A673 (cell line): ENCODE measurements at regions of chr17 and their contacts with region 1.

Region 1: GRCh38 chr17:7561028-7561575 is 617 bp upstream of the SENP3 start:
- DNase-seq: peak; percentile 93
- H3K4me3 ChIP-seq: peak overlapping the region; percentile 90
- H3K27ac ChIP-seq: peak overlapping the region; percentile 92
- H3K4me1 ChIP-seq: peaks cover 33% of the 10 kb centered on the region
- H3K27me3 ChIP-seq: no peaks in the 10 kb centered on the region
- CTCF ChIP-seq: peak; percentile 86

Region 2: DNA sequence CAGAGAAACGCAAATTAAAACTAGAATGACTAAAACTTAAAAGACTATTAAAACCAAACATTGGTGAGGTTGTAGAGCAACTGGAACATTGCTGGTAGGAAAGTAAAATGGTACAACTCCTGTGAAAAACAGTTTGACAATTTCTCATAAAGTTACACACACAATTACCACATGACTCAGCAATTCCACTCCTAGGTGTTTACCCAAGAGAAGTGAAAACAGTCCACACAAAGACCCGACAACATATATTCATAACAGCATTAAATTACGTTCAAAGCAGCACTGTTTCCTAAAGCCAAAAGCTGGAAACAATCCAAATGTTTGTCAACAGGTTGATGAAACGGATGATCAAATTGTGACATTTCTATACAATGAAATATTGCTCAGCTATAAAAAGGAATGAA is 591.8 kb before region 1 on chr17:
- CTCF ChIA-PET with region 1: interaction called, 11 read pairs
- POLR2A ChIA-PET with region 1: no interaction called
- intact Hi-C with region 1: no loop called
- DNase-seq: no peak
- H3K4me3 ChIP-seq: no peak overlapping the region
- H3K27ac ChIP-seq: no peak overlapping the region
- H3K4me1 ChIP-seq: no peaks in the 10 kb centered on the region
- H3K27me3 ChIP-seq: no peaks in the 10 kb centered on the region
- CTCF ChIP-seq: no peak

Region 3: DNA sequence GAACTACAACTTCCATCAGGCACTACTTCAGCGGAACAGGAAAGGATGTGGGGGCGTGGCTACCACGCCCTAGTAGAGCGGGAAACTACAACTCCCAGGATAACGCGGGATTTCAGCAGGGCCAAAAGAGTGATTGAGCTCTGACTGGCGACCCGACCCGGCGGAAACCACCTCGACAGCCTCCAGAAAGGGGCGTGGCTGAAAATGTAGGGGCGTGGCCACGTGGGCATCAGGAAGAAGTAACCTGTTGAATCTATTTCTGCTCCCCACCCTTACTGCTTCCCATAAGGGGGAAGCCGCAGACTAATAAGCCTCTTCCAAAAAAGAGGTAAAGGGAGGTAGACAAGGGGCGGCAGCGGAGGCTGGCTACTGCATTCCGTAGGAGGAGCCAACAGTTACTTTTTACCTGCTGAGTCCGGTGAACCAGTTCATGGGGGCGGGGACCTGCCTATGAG is 125.9 kb before region 1 on chr17 and contains the start of gene TMEM102:
- CTCF ChIA-PET with region 1: interaction called, 7 read pairs
- POLR2A ChIA-PET with region 1: no interaction called
- intact Hi-C with region 1: loop called (anchors 2 kb)
- DNase-seq: peak; percentile 99
- H3K4me3 ChIP-seq: peak within 1 kb of the TSS; percentile 90
- H3K27ac ChIP-seq: peak within 1 kb of the TSS; percentile 41
- H3K4me1 ChIP-seq: peaks cover 30% of the 10 kb centered on the region
- H3K27me3 ChIP-seq: no peaks in the 10 kb centered on the region
- CTCF ChIP-seq: no peak
- total RNA-seq, gene TMEM102: 3.2 and 4.7 TPM in 2 replicates

Region 4: DNA sequence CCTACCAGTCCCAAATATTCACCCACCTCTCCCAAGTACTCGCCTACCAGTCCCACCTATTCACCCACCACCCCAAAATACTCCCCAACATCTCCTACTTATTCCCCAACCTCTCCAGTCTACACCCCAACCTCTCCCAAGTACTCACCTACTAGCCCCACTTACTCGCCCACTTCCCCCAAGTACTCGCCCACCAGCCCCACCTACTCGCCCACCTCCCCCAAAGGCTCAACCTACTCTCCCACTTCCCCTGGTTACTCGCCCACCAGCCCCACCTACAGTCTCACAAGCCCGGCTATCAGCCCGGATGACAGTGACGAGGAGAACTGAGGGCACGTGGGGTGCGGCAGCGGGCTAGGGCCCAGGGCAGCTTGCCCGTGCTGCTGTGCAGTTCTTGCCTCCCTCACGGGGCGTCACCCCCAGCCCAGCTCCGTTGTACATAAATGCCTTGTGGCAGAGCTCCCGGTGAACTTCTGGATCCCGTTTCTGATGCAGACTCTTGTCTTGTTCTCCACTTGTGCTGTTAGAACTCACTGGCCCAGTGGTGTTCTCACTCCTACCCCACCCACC is 47.2 kb before region 1 on chr17:
- CTCF ChIA-PET with region 1: interaction called, 32 read pairs
- POLR2A ChIA-PET with region 1: interaction called, 3 read pairs
- intact Hi-C with region 1: loop called (anchors 1 kb)
- DNase-seq: no peak
- H3K4me3 ChIP-seq: no peak overlapping the region
- H3K27ac ChIP-seq: no peak overlapping the region
- H3K4me1 ChIP-seq: peaks cover 6% of the 10 kb centered on the region
- H3K27me3 ChIP-seq: no peaks in the 10 kb centered on the region
- CTCF ChIP-seq: no peak

Region 5: GRCh38 chr17:7614422-7615264 is 53.5 kb after region 1 on chr17 and contains the start of gene FXR2:
- CTCF ChIA-PET with region 1: no interaction called
- POLR2A ChIA-PET with region 1: no interaction called
- intact Hi-C with region 1: no loop called
- DNase-seq: peak; percentile 100
- H3K4me3 ChIP-seq: peak within 1 kb of the TSS; percentile 92
- H3K27ac ChIP-seq: peak within 1 kb of the TSS; percentile 91
- H3K4me1 ChIP-seq: peaks cover 20% of the 10 kb centered on the region
- H3K27me3 ChIP-seq: no peaks in the 10 kb centered on the region
- CTCF ChIP-seq: peak; percentile 65
- total RNA-seq, gene FXR2: 101 TPM in 2 replicates

Region 6: DNA sequence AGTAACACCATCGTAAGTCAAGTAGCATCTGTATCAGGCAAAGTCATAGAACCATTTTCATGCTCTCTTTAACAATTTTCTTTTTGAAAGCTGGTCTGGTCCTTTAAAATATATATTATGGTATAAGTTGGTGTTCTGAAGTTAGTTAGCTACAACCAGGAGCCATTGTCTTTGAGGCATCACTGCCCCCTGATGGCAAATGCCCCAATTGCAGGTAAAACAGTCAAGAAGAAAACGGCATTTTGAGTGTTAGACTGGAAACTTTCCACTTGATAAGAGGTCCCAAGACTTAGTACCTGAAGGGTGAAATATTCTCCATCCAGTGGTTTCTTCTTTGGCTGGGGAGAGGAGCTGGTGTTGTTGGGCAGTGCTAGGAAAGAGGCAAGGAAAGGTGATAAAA is 112.1 kb after region 1 on chr17:
- CTCF ChIA-PET with region 1: no interaction called
- POLR2A ChIA-PET with region 1: no interaction called
- intact Hi-C with region 1: no loop called
- DNase-seq: peak; percentile 44
- H3K4me3 ChIP-seq: no peak overlapping the region
- H3K27ac ChIP-seq: no peak overlapping the region
- H3K4me1 ChIP-seq: no peaks in the 10 kb centered on the region
- H3K27me3 ChIP-seq: no peaks in the 10 kb centered on the region
- CTCF ChIP-seq: peak; percentile 63